ENCODE measurements at regions of chr3 and their contacts with region 1.

Region 1: GRCh38 chr3:113287803-113288648 is 76.7 kb downstream of the BOC start:
- DNase-seq: peak; percentile 62
- H3K4me3 Mint-ChIP-seq: no peak overlapping the region
- H3K27ac Mint-ChIP-seq: no peak overlapping the region
- H3K4me1 Mint-ChIP-seq: peaks cover 14% of the 10 kb centered on the region
- H3K27me3 Mint-ChIP-seq: peaks cover under 1% of the 10 kb centered on the region
- CTCF ChIP-seq: peak; percentile 86

Region 2: GRCh38 chr3:112865757-112866156 is 422.3 kb before region 1 on chr3:
- CTCF ChIA-PET with region 1: no interaction called
- intact Hi-C with region 1: no loop called
- DNase-seq: no peak
- H3K4me3 Mint-ChIP-seq: no peak overlapping the region
- H3K27ac Mint-ChIP-seq: no peak overlapping the region
- H3K4me1 Mint-ChIP-seq: no peaks in the 10 kb centered on the region
- H3K27me3 Mint-ChIP-seq: no peaks in the 10 kb centered on the region
- CTCF ChIP-seq: no peak

Region 3: GRCh38 chr3:113136071-113136470 is 152.0 kb before region 1 on chr3:
- CTCF ChIA-PET with region 1: no interaction called
- intact Hi-C with region 1: loop called (anchors 1 kb)
- DNase-seq: no peak
- H3K4me3 Mint-ChIP-seq: no peak overlapping the region
- H3K27ac Mint-ChIP-seq: no peak overlapping the region
- H3K4me1 Mint-ChIP-seq: no peaks in the 10 kb centered on the region
- H3K27me3 Mint-ChIP-seq: no peaks in the 10 kb centered on the region
- CTCF ChIP-seq: peak; percentile 15

Region 4: DNA sequence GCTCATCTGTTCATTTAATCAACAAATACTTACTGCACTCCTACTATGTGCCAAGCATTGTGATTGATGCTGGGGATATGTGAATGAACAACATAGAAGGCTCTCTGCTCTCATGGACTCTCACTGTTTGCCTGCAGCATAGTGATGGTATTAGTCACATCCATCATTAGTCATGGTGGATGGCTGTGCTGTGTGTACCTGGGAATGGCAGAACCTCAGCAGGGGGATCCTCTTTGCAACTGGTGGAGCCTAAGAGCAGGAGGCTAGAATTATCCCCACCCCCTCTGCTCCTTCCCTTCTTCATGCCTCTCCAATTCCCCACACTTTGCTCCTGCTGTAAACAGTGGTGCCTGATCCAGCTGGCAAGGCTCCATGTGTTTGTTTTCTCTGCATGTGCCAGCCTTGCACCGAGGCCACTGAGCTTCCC is 56.2 kb before region 1 on chr3:
- CTCF ChIA-PET with region 1: no interaction called
- intact Hi-C with region 1: no loop called
- DNase-seq: peak; percentile 43
- H3K4me3 Mint-ChIP-seq: no peak overlapping the region
- H3K27ac Mint-ChIP-seq: no peak overlapping the region
- H3K4me1 Mint-ChIP-seq: peaks cover 13% of the 10 kb centered on the region
- H3K27me3 Mint-ChIP-seq: peaks cover 25% of the 10 kb centered on the region
- CTCF ChIP-seq: no peak

Region 5: DNA sequence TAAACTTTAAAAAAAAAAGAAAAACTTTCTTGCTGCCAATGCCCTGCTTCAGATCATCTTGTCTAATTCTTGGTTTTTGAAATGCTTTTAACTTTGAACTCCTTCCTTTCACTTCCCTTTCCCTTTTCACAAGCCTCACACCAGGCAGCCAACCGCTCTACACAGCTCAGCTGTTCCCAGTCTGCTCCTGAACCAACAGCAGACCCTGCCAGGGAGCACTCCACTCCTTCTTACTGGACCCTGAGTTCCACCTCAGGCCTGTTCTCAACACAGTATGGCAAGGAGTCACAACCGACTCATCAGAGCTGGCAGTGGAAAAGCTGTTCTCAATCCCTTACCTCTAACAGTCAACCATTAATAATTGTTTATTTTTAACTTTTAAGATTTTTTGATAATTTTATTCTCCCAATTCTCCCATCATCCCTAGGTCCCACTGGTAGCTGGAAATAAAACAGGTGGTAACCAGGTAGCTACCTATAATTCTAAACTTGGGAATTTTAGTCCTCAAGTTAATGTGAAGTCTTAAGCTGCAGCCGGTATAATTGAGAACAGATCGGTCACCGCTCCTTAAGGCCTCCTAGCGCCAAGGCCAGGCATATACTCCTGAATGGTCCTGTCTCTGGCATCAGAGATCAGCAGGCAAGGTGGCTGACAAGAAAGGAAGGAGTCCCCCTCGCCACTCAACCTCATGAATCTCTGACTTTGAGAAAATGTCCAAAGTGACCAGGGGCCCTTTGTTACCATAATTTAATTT is 32.7 kb before region 1 on chr3:
- CTCF ChIA-PET with region 1: no interaction called
- intact Hi-C with region 1: no loop called
- DNase-seq: no peak
- H3K4me3 Mint-ChIP-seq: no peak overlapping the region
- H3K27ac Mint-ChIP-seq: no peak overlapping the region
- H3K4me1 Mint-ChIP-seq: no peaks in the 10 kb centered on the region
- H3K27me3 Mint-ChIP-seq: peaks cover 48% of the 10 kb centered on the region
- CTCF ChIP-seq: no peak